ENCODE measurements at regions of chr15 and their contacts with region 1.

Region 1: DNA sequence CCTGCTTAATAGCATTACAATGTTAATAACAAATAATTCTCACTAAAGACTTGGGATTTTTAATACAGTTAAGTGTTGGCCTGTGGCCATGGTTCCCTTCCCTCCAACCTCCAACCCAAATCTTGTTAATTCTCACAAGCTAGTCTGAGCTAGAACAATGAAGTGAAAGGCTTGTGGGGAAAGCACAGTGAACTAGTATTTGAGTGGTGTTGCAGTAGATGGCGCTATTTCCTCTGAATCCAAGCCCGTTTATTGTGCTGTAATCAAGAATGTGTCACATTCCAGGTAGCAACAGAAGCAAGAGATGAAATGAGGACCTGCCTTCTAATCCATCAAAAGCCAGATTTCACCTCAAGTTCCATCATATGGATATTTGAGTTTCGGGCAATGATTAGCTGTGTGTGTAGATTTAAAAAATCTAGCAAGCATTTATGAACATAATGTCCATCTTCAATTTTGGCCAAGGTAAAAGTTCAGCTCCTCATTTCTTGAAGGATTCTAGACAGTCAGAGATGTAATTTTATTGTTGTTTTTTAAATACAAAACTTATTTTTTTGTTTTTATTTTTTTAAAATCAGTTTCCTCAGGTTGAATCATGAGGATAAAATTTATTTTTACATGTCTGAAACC is 160.7 kb downstream of the SQOR start:
- H3K4me3 ChIP-seq: no peak overlapping the region
- H3K27ac ChIP-seq: no peak overlapping the region
- H3K4me1 ChIP-seq: no peaks in the 10 kb centered on the region
- CTCF ChIP-seq: no peak

Region 2: GRCh38 chr15:45690581-45691260 is 104.8 kb before region 1 on chr15:
- CTCF ChIA-PET with region 1: no interaction called
- POLR2A ChIA-PET with region 1: no interaction called
- H3K4me3 ChIP-seq: no peak overlapping the region
- H3K27ac ChIP-seq: no peak overlapping the region
- H3K4me1 ChIP-seq: no peaks in the 10 kb centered on the region
- CTCF ChIP-seq: no peak

Region 3: DNA sequence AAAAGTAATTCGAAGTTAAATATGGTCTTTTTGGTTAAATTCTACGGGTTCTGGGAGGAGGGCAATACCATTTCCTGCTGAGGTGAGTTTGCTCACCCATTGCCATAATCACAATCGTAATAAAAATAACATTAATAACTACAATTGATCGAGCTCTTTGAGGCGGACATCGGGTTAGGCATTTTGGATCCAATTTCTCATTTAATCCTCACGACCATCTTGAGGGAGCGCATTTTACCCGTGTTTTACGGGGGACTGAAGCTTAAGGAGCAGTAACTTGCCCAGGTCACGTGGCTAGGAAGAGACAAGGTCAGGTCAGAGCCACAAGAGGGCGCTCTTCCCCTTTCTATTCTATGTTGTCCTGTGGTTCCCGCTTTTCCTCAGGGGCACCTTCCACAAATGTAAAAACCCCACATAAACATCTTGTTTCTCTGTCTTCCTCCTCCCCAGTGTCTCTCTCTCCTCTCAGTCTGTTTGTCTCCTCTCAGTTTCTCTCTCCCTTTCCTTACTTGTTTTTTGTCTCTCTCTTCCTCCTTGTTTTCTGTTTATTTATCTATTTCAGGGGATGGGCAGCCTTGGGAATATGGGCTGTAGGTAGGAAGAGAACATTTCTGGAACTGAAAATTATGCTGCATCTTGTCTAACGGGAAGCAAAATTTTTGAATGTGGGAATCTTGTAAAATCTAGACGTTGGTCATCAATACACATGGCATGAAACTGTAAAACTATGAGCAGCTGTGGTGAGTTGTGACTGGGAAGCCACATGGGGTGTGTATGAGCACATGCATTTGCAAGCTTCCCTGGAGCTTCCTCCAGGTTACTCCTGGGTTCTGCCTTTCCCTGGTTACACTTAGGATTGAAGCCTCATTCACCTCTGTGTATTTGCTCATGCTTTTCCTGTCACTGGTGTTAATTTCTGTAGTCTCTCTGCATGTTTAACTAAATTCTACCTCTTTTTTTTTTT is 89.8 kb before region 1 on chr15:
- CTCF ChIA-PET with region 1: interaction called, 17 read pairs
- POLR2A ChIA-PET with region 1: no interaction called
- H3K4me3 ChIP-seq: peak overlapping the region; percentile 32
- H3K27ac ChIP-seq: no peak overlapping the region
- H3K4me1 ChIP-seq: no peaks in the 10 kb centered on the region
- CTCF ChIP-seq: peak; percentile 62